HEK293 (cell line): ENCODE measurements at regions of chr6 and their contacts with region 1.

Region 1: DNA sequence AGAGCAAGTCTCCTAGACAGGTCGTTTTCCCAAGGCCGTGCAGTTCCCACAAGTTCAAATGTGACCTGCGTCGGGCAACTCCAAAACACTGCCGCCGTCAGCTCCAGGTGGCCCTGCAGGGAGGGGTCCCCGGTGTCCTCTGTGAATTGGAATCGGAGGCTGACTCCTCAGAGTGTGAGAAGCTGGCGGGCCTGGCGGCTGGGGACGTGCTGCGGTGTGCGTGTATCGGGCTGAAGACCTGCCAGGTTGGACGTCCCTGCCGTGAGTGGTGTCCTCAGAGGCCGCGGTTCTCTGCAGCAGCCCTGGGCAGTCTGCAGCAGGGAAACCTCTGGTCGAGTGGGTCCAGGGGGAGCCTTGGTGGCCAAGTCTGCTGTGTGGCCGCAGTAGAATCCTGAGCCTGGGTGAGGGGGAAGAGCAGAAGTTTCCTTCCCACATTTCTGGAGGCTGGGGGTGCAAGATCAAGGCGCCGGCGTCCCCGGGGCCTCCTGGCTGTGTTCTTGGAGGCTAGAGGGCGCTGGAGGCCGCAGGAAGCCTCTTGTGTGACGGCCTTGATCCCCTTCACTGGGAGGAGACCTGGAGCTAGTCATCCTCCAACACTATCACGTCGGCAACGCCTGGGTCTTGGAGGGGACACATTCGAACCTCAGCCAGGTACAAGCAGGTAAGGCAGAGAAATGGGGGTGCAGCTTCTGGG is 115.2 kb upstream of the FRMD1 start:
- H3K4me3 ChIP-seq: no peak overlapping the region
- H3K27ac ChIP-seq: no peak overlapping the region
- H3K4me1 ChIP-seq: 0 out of 2 replicates have a peak, but pooled peaks cover 5% of the 10 kb centered on the region
- CTCF ChIP-seq: no peak

Region 2: GRCh38 chr6:168218785-168219566 is 24.8 kb after region 1 on chr6:
- CTCF ChIA-PET with region 1: interaction called, 11 read pairs
- POLR2A ChIA-PET with region 1: no interaction called
- H3K4me3 ChIP-seq: no peak overlapping the region
- H3K27ac ChIP-seq: no peak overlapping the region
- H3K4me1 ChIP-seq: peaks cover 10% of the 10 kb centered on the region
- CTCF ChIP-seq: no peak